ENCODE measurements at regions of chr12 and their contacts with region 1.

Region 1: GRCh38 chr12:96132819-96133218 is 61.4 kb upstream of the ELK3 start:
- DNase-seq: no peak
- ATAC-seq: no peak
- H3K4me3 ChIP-seq: no peak overlapping the region
- H3K27ac ChIP-seq: no peak overlapping the region
- H3K4me1 ChIP-seq: no peaks in the 10 kb centered on the region
- H3K27me3 ChIP-seq: peaks cover 0 to 4% (median 0%) of the 10 kb centered on the region in 3 donors
- CTCF ChIP-seq: no peak

Region 2: GRCh38 chr12:96107236-96107635 is 25.6 kb before region 1 on chr12:
- intact Hi-C with region 1: loop called in 1 of 2 experiments (anchors 2 kb)
- DNase-seq: no peak
- ATAC-seq: no peak
- H3K4me3 ChIP-seq: no peak overlapping the region
- H3K27ac ChIP-seq: peak overlapping the region; percentile 36
- H3K4me1 ChIP-seq: no peaks in the 10 kb centered on the region
- H3K27me3 ChIP-seq: no peaks in the 10 kb centered on the region
- CTCF ChIP-seq: no peak

Region 3: DNA sequence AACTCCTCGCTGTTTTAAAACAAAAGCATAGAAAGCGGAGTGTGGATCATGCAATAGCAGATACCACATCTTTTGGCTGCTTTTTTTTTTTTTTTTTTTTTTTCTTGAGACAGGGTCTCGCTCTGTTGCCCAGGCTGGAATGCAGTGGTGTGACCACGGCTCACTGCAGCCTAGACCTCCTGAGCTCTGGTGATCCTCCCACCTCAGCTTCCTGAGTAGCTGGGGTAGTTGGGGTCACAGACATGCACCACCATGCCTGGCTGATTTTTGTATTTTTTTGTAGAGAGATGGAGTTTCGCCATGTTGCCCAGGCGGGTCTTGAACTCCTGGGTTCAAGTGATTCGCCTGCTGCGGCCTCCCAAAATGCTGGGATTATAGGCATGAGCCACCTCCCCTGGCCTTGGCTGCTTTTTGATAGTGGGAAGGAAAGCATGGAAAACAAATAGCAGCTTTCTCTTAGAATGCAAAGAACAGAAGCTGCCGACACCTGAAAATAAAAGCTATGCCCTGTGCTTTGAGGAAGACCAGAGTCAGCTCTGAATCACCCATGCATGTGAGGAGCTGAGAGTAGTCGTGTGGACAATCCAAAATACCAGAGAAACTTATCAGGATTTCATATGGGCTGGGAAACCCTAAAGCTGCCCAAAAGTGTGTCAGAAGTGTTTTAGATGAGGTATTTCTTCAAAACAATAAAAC is 57.7 kb after region 1 on chr12:
- intact Hi-C with region 1: no loop called
- DNase-seq: no peak
- ATAC-seq: no peak
- H3K4me3 ChIP-seq: no peak overlapping the region
- H3K27ac ChIP-seq: no peak overlapping the region
- H3K4me1 ChIP-seq: no peaks in the 10 kb centered on the region
- H3K27me3 ChIP-seq: peaks cover 0 to 25% (median 6%) of the 10 kb centered on the region in 3 donors
- CTCF ChIP-seq: no peak

Region 4: DNA sequence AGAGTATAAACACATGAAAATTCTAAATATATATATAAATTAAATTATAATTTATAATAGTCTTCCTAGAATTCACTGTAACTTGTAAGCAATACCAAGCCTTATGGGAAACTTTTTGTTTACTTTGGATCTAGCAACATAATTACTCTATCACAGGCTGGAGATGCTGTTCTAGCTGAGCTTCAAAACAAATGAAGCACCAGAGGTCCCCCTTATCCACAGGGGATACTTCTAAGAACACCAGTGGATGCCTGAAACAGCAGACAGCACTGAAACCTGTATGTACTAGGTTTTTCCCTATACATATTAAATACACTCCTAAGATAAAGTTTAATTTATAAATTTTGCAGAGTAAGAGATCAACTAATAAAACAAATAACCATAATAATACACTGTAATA is 170.8 kb after region 1 on chr12:
- intact Hi-C with region 1: no loop called
- DNase-seq: no peak
- ATAC-seq: no peak
- H3K4me3 ChIP-seq: no peak overlapping the region
- H3K27ac ChIP-seq: no peak overlapping the region
- H3K4me1 ChIP-seq: no peaks in the 10 kb centered on the region
- H3K27me3 ChIP-seq: no peaks in the 10 kb centered on the region
- CTCF ChIP-seq: no peak